Lower leg skin (tissue), 4 donors: ENCODE measurements at regions of chr6 and their contacts with region 1.

Region 1: GRCh38 chr6:44338228-44339122 is 4.0 kb upstream of the SPATS1 start:
- DNase-seq: peak; percentile 61 to 89
- H3K4me3 ChIP-seq: no peak overlapping the region
- CTCF ChIP-seq: peak in 1 of 3 donors; percentile 38
- POLR2A ChIP-seq: no peak

Region 2: DNA sequence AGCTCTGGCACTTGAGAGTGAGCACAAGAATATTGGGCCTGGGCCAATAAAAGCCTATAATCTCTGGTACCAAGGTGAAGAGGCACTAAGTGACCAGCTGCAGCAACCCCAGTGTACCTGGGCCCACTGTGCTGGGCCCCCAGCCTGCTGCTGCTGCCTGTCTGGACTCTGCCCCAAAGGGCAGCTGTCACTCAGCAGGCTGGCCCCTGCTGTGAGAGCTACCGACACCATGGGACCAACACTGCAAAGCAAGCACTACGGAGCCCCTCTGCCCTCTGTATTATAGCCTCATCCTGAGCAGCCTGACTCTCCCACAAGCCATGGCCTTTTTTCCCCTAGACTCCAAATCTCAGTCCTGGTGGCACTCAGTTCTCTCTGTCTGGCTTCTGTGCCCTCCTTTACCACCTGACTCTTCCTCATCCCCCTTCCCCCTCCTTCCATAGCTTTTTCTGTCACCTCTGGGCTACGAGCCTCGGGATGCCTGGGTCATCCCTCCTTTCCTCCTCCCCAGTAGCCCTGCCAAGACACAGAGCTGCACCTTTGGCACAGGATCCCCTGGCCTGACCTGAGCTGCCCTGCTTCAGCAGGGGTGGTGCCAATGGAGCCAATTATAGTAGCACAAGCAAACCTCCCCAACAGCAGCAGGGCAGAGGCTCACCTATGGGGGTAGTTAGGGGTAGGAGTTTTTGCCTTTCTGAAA is 1302.8 kb before region 1 on chr6:
- intact Hi-C with region 1: no loop called
- DNase-seq: no peak
- H3K4me3 ChIP-seq: no peak overlapping the region
- CTCF ChIP-seq: no peak
- POLR2A ChIP-seq: no peak

Region 3: DNA sequence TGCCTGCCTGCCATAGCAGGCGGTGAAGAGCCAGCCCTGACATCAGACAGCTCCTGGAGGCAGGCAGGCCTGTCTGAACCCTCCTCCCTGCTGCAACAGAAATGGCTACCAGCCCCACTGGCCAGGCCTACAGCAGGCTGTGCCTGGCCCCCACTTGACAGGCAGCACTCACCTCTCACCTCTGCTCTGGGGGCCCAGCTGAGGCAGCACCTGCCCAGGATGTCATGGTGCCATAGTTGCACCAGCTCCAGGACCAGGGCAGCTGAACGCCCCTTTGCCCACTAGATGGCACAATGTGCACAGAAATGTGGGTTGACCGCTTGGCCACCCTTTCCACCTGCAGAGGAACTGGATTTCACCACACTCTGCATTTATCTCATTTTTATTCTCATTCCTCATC is 241.9 kb before region 1 on chr6:
- intact Hi-C with region 1: loop called (anchors 10 kb)
- DNase-seq: peak; percentile 71 to 94
- H3K4me3 ChIP-seq: no peak overlapping the region
- CTCF ChIP-seq: peak in 1 of 3 donors; percentile 76
- POLR2A ChIP-seq: no peak

Region 4: GRCh38 chr6:44270526-44271405 is 67.7 kb before region 1 on chr6:
- intact Hi-C with region 1: loop called (anchors 5 kb)
- DNase-seq: no peak
- H3K4me3 ChIP-seq: no peak overlapping the region
- CTCF ChIP-seq: no peak
- POLR2A ChIP-seq: no peak

Region 5: GRCh38 chr6:44381739-44382138 is 43.3 kb after region 1 on chr6:
- intact Hi-C with region 1: no loop called
- DNase-seq: peak in 1 of 2 donors; percentile 43
- H3K4me3 ChIP-seq: no peak overlapping the region
- CTCF ChIP-seq: no peak
- POLR2A ChIP-seq: no peak